Activated T-helper 2 cell treated with anti-CD3 and anti-CD28 coated beads, Interferon-gamma antibody, Interleukin-2, Interleukin-4, amounts not matched to agents 10 μg/mL and 5 μg/mL and 100 μg/mL, durations not matched to agents 14 hours and 24 hours and 36 hours (primary cell): ENCODE measurements at regions of chr15 and their contacts with region 1.

Region 1: GRCh38 chr15:57306161-57306943 is 70.0 kb upstream of the CGNL1 start:
- DNase-seq: peak; percentile 68
- H3K4me3 Mint-ChIP-seq: peak overlapping the region; percentile 51
- H3K27ac Mint-ChIP-seq: no peak overlapping the region
- H3K4me1 Mint-ChIP-seq: no peaks in the 10 kb centered on the region
- H3K27me3 Mint-ChIP-seq: peaks cover 6% of the 10 kb centered on the region

Region 2: DNA sequence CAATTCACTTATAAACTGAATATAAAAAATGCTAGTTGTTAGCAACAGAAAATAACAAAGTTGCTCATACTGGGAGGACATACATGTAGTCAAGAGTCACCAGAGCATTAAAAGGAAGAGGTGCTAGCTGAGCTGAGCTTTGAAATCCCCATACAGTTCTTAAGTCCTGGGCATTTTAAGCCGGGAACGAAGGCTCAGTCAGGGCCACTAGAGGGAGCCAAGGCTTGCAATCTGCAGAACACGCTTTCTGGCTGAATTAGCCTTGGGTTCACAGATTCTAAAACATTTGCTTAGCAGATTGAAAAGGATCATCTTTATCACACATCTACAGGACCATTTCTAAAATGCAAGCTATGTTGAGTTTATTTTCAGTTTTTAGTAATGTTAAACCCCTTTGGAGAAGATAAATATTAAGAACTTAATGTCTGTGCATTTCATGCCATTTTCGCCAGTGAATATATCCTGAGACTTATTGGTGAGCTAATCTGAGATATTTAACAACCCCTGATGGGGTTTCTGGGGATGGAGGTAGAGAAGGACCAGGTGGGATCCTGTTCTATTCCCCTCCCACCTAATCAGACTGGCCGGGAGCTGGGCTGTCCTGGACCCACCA is 815.1 kb before region 1 on chr15:
- intact Hi-C with region 1: loop called (anchors 1 kb)
- DNase-seq: peak; percentile 33
- H3K4me3 Mint-ChIP-seq: no peak overlapping the region
- H3K27ac Mint-ChIP-seq: no peak overlapping the region
- H3K4me1 Mint-ChIP-seq: peaks cover 6% of the 10 kb centered on the region
- H3K27me3 Mint-ChIP-seq: peaks cover 11% of the 10 kb centered on the region

Region 3: GRCh38 chr15:56496635-56497034 is 809.7 kb before region 1 on chr15:
- intact Hi-C with region 1: loop called (anchors 1 kb)
- DNase-seq: no peak
- H3K4me3 Mint-ChIP-seq: no peak overlapping the region
- H3K27ac Mint-ChIP-seq: no peak overlapping the region
- H3K4me1 Mint-ChIP-seq: peaks cover 10% of the 10 kb centered on the region
- H3K27me3 Mint-ChIP-seq: peaks cover 31% of the 10 kb centered on the region

Region 4: DNA sequence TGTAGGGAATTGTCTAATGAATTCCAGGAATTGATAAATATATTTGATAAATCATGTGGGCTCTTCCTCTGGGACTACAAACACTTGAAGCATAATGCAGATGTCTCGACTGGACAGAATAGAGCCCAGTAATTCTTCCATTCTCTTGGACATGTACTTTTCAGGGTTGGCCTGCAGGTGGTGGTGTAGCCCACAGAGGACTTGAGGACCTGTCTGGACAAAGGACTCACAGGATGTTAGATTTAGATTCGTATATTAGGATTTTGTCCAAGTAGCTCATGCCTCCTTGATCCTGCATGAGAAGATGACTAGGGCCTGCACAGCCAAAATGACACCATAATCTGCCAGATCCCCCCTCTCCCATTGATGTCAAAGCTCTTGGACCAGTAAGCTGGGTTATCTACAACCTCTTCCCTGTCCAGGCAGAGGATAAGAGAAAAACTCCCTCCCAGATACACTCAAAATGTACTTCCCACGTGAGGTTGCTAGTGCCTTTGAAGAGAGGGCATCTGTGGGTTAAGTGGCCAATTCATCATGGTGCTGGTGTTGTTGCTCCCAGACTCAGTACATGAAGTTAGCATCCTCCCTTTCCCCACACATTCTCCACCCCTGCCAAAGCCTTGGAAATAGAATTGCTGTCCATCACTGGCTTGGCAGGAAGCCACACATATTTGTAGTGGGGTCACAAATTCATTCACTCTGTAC is 484.5 kb before region 1 on chr15:
- intact Hi-C with region 1: loop called (anchors 1 kb)
- DNase-seq: peak; percentile 17
- H3K4me3 Mint-ChIP-seq: no peak overlapping the region
- H3K27ac Mint-ChIP-seq: no peak overlapping the region
- H3K4me1 Mint-ChIP-seq: peaks cover 3% of the 10 kb centered on the region
- H3K27me3 Mint-ChIP-seq: peaks cover 4% of the 10 kb centered on the region

Region 5: DNA sequence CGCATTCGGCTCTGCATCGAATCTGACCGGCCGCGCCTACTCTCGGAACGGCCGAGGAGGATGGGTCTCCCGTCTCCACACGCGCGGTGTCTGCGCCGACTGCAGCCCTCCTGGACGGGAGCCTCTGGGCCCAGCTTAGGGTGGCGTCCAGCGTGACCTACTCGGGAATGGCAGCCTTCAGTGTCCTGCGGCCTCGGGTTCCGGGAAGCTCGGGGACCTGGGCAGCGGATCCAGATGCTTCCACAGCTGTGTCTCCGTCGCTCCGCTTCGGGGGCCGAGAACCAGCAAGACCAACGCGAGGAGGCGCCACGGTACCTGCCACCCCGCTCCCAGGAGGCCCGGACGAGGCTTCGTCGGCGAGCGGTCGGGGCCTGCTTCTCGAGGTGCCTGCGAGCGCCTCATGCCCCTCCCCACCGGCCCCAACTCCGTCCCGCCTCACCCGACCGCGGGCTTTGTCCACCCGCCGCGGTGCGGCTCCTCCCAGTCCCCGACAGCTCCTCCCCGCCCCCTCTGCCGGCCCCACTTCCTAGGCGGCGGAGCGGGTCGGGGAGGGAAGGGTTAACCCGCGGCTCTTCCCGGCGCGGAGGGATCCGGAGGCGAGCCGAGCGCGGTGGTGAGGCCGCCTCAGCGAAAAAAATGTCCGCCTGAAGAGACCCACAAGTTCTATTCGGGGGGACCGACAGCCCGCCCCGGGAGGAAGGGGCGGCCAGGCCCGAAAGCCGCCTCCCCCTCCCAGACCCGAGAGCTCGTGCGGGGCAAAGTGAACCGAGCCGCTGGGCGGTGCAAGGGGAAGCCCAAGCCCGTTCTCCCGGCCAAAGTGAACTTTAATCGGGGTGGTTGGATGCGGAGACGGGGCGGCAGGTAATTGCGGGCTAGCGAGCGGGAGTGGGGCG is 388.1 kb before region 1 on chr15 and contains the start of gene TCF12:
- intact Hi-C with region 1: loop called (anchors 10 kb)
- DNase-seq: peak; percentile 88
- H3K4me3 Mint-ChIP-seq: peak within 1 kb of the TSS; percentile 92
- H3K27ac Mint-ChIP-seq: peak within 1 kb of the TSS; percentile 76
- H3K4me1 Mint-ChIP-seq: peaks cover 25% of the 10 kb centered on the region
- H3K27me3 Mint-ChIP-seq: no peaks in the 10 kb centered on the region
- total RNA-seq, gene TCF12: 70.7 and 72.8 TPM in 2 replicates

Region 6: DNA sequence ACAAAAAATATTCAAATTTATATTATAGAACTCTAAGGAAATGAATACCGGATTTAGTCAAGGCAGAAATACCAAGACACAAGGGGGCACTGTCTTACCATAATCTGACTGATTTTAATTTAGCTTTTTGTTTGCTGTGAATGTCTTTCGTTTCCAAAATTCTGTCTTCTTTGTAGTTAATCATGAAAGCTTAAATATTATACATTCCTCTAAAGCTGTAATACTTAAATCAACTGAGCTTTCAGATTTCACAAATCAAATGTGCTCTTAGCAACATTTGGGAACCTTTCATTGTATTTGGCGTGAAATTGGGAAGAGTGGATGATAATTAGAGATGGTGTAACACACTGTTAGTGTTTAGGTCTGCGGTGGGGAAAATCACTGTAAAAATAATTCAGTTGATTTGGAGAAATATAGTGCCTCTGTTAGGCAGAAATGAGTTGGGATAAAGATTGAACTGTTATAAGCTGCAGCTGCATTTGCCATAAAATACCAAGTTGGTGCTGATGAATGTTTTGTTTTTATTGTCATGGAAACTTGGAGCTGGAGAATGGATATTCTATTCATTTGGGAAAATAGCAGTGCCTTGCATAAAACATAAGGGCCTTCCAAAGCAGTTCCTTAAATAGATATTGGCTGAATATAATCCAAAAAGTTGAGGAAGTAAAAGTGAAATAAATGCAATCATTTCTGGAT is 159.7 kb before region 1 on chr15:
- intact Hi-C with region 1: loop called (anchors 1 kb)
- DNase-seq: no peak
- H3K4me3 Mint-ChIP-seq: no peak overlapping the region
- H3K27ac Mint-ChIP-seq: no peak overlapping the region
- H3K4me1 Mint-ChIP-seq: peaks cover 10% of the 10 kb centered on the region
- H3K27me3 Mint-ChIP-seq: no peaks in the 10 kb centered on the region

Region 7: GRCh38 chr15:57503066-57503702 is 196.8 kb after region 1 on chr15:
- intact Hi-C with region 1: no loop called
- DNase-seq: no peak
- H3K4me3 Mint-ChIP-seq: no peak overlapping the region
- H3K27ac Mint-ChIP-seq: no peak overlapping the region
- H3K4me1 Mint-ChIP-seq: no peaks in the 10 kb centered on the region
- H3K27me3 Mint-ChIP-seq: peaks cover 2% of the 10 kb centered on the region